Activated CD4-positive, alpha-beta memory T cell treated with anti-CD3 and anti-CD28 coated beads for 36 hours (primary cell): ENCODE measurements at regions of chr5 and their contacts with region 1.

Region 1: GRCh38 chr5:154072414-154073171 is 33.8 kb downstream of the MFAP3 start:
- DNase-seq: peak; percentile 89
- H3K4me3 Mint-ChIP-seq: no peak overlapping the region
- H3K27ac Mint-ChIP-seq: no peak overlapping the region
- H3K4me1 Mint-ChIP-seq: peaks cover 8% of the 10 kb centered on the region
- H3K27me3 Mint-ChIP-seq: no peaks in the 10 kb centered on the region

Region 2: GRCh38 chr5:153445851-153446579 is 626.6 kb before region 1 on chr5:
- CTCF ChIA-PET with region 1: no interaction called
- POLR2A ChIA-PET with region 1: no interaction called
- intact Hi-C with region 1: no loop called
- DNase-seq: no peak
- H3K4me3 Mint-ChIP-seq: no peak overlapping the region
- H3K27ac Mint-ChIP-seq: no peak overlapping the region
- H3K4me1 Mint-ChIP-seq: no peaks in the 10 kb centered on the region
- H3K27me3 Mint-ChIP-seq: peaks cover 3% of the 10 kb centered on the region

Region 3: GRCh38 chr5:153974131-153974812 is 98.3 kb before region 1 on chr5:
- CTCF ChIA-PET with region 1: interaction called, 18 read pairs
- POLR2A ChIA-PET with region 1: no interaction called
- intact Hi-C with region 1: loop called (anchors 1 kb)
- DNase-seq: peak; percentile 35
- H3K4me3 Mint-ChIP-seq: no peak overlapping the region
- H3K27ac Mint-ChIP-seq: no peak overlapping the region
- H3K4me1 Mint-ChIP-seq: no peaks in the 10 kb centered on the region
- H3K27me3 Mint-ChIP-seq: peaks cover 3% of the 10 kb centered on the region

Region 4: GRCh38 chr5:154002093-154002492 is 70.5 kb before region 1 on chr5:
- CTCF ChIA-PET with region 1: no interaction called
- POLR2A ChIA-PET with region 1: no interaction called
- intact Hi-C with region 1: no loop called
- DNase-seq: no peak
- H3K4me3 Mint-ChIP-seq: no peak overlapping the region
- H3K27ac Mint-ChIP-seq: no peak overlapping the region
- H3K4me1 Mint-ChIP-seq: no peaks in the 10 kb centered on the region
- H3K27me3 Mint-ChIP-seq: no peaks in the 10 kb centered on the region

Region 5: DNA sequence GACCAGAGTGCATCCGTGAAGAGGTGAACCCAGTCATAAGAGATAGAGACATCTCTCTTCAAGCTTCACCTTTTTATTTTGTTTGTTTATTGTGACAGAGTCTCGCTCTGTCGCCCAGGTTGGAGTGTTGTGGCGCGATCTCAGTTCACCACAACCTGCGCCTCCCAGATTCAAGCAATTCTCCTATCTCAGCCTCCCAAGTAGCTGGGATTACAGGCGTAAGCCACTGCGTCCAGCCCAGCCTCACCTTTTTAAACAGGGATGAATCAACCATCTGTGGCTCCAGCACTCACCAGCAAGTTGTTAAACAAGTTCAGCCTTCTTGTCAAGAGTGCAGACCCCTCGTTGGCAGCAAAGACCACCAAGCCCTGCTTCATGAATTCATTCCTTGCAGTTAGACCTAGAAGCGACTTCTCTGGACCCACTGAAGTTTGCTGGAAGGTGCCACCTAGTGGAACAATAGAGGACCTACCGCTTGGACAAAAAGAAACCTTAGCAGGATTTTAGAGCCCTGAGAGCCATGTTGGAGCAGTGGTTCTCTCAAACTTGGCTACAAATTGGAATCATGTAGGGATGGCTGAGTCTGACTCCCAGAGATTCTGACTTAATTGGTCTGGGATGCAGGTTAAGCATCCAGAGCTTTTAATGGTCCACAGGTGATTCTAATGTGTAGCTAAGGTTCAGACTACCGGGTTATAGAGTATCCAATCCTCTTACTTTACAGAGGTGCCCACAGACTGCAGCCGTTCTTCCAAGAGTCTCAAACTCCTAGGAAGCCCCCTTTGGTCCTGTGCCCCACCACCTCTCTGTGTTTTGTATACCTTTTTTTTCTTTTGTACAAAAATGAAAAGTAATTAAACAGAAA is 107.5 kb after region 1 on chr5:
- CTCF ChIA-PET with region 1: interaction called, 88 read pairs
- POLR2A ChIA-PET with region 1: no interaction called
- intact Hi-C with region 1: loop called (anchors 1 kb)
- DNase-seq: peak; percentile 37
- H3K4me3 Mint-ChIP-seq: no peak overlapping the region
- H3K27ac Mint-ChIP-seq: no peak overlapping the region
- H3K4me1 Mint-ChIP-seq: no peaks in the 10 kb centered on the region
- H3K27me3 Mint-ChIP-seq: peaks cover 3% of the 10 kb centered on the region

Region 6: GRCh38 chr5:154214371-154215106 is 141.9 kb after region 1 on chr5:
- CTCF ChIA-PET with region 1: interaction called, 4 read pairs
- POLR2A ChIA-PET with region 1: no interaction called
- intact Hi-C with region 1: loop called (anchors 1 kb)
- DNase-seq: no peak
- H3K4me3 Mint-ChIP-seq: peak overlapping the region; percentile 47
- H3K27ac Mint-ChIP-seq: peak overlapping the region; percentile 86
- H3K4me1 Mint-ChIP-seq: peaks cover 53% of the 10 kb centered on the region
- H3K27me3 Mint-ChIP-seq: no peaks in the 10 kb centered on the region

Region 7: DNA sequence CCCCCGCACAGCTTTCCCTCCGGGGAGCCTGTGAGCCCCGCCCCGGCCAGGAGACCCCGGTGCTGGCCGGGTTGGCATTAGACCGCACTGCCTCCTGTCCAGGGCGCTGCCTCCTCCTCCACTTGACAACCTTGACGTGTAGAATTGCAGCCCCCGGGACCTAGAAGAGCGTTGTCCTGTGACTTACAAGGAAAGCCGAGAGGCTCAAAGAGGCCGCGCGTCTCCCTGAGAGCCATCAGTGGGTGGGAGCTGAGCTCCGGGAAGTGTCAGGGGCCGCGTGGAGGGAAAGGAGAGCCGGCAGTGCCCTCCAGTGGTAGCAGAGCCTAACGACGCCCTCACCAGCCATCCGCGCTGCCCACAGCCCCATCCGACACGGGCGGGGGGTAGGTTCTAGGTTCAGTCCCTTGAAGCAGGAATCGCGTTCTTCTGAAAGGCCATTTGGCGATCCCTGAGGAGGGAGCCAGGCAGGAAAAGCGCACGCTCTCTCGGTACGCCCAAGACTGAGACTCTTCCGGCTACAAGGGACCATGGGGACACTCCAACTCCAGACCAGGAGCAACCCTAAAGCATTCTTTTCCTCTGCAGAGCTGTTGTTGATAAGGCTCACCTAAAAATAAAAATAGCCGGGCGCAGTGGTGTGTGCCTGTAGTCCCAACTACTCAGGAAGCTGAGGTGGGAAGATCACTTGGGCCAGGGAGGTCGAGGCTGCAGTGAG is 332.6 kb after region 1 on chr5:
- CTCF ChIA-PET with region 1: interaction called, 167 read pairs
- POLR2A ChIA-PET with region 1: interaction called, 3 read pairs
- intact Hi-C with region 1: loop called (anchors 1 kb)
- DNase-seq: peak; percentile 83
- H3K4me3 Mint-ChIP-seq: peak overlapping the region; percentile 20
- H3K27ac Mint-ChIP-seq: no peak overlapping the region
- H3K4me1 Mint-ChIP-seq: peaks cover 10% of the 10 kb centered on the region
- H3K27me3 Mint-ChIP-seq: no peaks in the 10 kb centered on the region

Region 8: GRCh38 chr5:154610321-154611154 is 537.9 kb after region 1 on chr5:
- CTCF ChIA-PET with region 1: interaction called, 10 read pairs
- POLR2A ChIA-PET with region 1: no interaction called
- intact Hi-C with region 1: loop called (anchors 1 kb)
- DNase-seq: peak; percentile 84
- H3K4me3 Mint-ChIP-seq: no peak overlapping the region
- H3K27ac Mint-ChIP-seq: no peak overlapping the region
- H3K4me1 Mint-ChIP-seq: peaks cover 6% of the 10 kb centered on the region
- H3K27me3 Mint-ChIP-seq: peaks cover 55% of the 10 kb centered on the region